Left colon (tissue), 2 donors: ENCODE measurements at regions of chr13 and their contacts with region 1.

Region 1: DNA sequence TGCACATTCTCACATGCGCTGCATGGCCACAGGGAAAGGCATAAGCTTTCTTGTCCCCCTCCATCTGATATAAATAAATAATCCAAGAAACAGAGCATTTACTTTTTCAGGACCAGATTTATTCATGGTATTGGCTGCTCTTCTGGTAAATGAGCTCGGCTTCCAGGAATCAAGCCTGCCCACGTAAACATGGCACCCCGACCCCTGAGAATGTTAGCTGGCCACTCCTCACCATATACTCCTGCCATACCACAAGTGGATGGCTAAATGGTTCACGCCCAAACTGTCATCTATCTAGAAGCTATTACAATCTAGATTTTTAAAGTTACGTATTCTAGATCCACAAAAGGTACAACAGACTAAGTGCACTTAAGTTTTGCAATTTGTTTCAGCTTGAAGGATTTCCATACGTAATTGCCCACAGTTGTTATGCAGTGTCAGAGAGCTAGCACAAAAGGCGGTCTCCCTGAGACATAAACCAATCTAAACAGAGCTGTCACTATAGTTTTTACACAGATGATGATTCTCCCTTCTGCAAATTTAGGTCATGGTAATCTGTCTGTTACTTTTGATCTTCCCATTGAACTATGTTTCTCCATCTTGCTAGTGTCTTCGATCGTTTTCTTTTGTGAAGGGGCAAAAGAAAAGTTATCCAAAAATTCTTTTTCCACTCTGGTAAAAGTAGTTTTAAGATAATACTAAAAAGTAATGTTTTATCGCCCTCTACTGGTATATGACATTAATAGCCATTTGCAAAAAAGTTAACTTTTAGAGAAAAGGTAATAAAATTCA is 16.2 kb upstream of the FOXO1 start:
- DNase-seq: no peak
- ATAC-seq: no peak

Region 2: GRCh38 chr13:39684531-39685137 is 998.0 kb before region 1 on chr13:
- intact Hi-C with region 1: loop called in 1 of 2 experiments (anchors 10 kb)
- DNase-seq: no peak
- ATAC-seq: no peak

Region 3: GRCh38 chr13:39942552-39943273 is 739.9 kb before region 1 on chr13:
- intact Hi-C with region 1: loop called in 1 of 2 experiments (anchors 10 kb)
- DNase-seq: peak; percentile 46 to 71
- ATAC-seq: peak; percentile 96

Region 4: DNA sequence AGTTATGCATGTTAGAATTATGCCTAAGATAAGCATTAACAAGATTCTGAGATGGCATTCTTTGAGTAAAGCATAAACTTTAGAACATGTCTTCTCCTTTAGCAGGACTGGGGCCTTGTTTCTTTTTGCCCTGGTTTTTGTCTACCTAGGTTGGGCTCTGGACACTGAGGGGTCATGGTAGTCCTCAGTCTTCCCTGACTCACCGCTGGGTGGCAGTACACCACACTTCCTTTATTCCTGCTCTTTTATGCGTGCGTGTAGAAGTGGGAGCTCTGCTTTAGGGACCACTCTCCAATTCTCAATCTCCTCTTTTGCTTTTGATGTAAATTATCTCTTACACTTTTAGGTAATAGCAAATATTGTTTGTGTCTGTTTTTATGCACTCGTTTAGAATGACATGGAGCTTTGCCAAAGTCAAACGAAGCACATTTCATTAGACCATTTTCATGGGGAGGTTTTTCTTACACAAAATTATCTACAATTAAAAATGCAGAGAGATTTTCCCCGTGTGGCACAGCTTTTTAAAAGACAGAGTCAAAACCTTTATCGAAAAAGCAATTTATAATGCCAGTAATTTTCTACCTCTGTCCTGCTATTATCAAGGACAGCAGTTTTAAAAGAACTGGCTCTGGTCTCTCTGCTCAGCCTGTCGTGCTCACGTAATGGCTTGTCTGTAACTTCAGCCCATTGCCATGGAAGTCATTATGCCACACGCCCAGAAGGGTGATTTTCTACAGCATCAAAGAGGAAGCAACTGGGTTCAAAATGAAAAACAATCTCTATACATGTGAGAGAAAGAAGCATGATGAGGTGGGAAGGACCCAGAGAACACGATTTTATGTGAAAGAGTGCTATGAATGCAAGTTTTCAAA is 613.2 kb before region 1 on chr13:
- intact Hi-C with region 1: loop called (anchors 5 kb)
- DNase-seq: peak; percentile 55 to 81
- ATAC-seq: peak; percentile 92

Region 5: GRCh38 chr13:40433577-40433976 is 249.1 kb before region 1 on chr13:
- intact Hi-C with region 1: no loop called
- DNase-seq: peak in 1 of 2 donors; percentile 35
- ATAC-seq: no peak